Activated CD8-positive, alpha-beta T cell treated with anti-CD3 and anti-CD28 coated beads, Interleukin-2, amount 10 ng/mL, durations not matched to agents 7 days and 5 days (primary cell): ENCODE measurements at regions of chr10 and their contacts with region 1.

Region 1: GRCh38 chr10:101840741-101841453 is 2.7 kb downstream of the KCNIP2 start:
- DNase-seq: peak; percentile 82
- ATAC-seq: peak; percentile 74
- H3K4me3 Mint-ChIP-seq: peak overlapping the region; percentile 74
- H3K27ac Mint-ChIP-seq: no peak overlapping the region
- H3K4me1 Mint-ChIP-seq: peaks cover 43% of the 10 kb centered on the region
- H3K27me3 Mint-ChIP-seq: peaks cover 17% of the 10 kb centered on the region

Region 2: GRCh38 chr10:101716851-101717659 is 123.8 kb before region 1 on chr10:
- CTCF ChIA-PET with region 1: no interaction called
- POLR2A ChIA-PET with region 1: no interaction called
- DNase-seq: no peak
- ATAC-seq: no peak
- H3K4me3 Mint-ChIP-seq: no peak overlapping the region
- H3K27ac Mint-ChIP-seq: no peak overlapping the region
- H3K4me1 Mint-ChIP-seq: no peaks in the 10 kb centered on the region
- H3K27me3 Mint-ChIP-seq: peaks cover 25% of the 10 kb centered on the region

Region 3: DNA sequence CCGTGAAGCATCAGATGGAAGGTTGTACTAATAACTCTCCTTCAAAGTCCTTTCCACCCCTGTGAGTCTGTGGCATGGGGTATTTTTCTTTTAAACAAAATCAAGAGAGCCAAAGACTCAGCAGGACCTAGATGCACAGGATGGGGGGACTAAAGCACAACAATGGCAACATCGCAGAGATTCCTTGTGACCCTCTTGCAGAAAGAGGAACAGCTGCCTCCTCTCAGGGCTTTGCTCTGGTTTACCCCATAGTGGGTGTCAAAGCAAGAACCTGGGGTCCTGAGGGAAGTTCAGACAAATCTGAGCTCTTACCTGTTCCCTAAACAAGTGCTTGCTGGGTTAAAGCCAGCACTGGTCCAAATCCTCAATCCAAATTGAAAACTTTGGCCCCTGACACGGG is 104.2 kb before region 1 on chr10:
- CTCF ChIA-PET with region 1: no interaction called
- POLR2A ChIA-PET with region 1: no interaction called
- DNase-seq: no peak
- ATAC-seq: no peak
- H3K4me3 Mint-ChIP-seq: no peak overlapping the region
- H3K27ac Mint-ChIP-seq: no peak overlapping the region
- H3K4me1 Mint-ChIP-seq: no peaks in the 10 kb centered on the region
- H3K27me3 Mint-ChIP-seq: peaks cover 19% of the 10 kb centered on the region

Region 4: DNA sequence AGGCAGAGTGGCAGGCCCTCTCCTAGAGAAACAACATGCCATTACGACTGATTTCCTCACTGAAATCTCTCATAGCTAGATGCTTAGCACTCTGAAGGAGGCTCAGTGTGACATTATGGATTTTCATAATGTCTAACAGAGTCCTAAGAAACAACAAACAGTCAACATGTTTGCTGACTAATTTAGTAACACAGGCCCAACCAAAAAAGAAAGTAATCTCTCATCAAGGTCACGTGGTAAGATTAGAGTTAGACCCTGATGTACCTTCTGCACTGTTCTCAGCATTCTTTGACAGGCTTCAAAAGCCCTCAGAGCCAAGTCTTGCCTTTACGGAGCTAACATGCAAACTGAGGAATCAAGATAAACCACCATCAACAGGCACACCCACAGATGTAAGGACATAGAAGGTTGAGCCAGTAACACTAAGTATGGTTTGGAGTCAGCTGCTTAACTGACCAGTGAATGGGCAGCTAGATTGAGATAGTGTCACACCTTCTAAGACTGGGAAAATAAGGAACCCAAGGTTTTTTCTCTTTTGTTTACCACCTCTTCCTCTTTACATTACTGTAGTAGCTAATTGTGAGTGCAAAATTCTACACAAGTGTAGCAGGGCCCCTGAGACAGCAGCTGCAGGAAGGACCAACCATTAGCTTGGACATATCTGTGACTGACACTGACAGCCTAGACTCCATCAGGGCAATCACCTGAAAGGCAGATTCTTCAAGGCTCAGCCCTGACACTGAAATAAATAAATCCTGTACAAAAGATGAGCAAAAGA is 18.0 kb after region 1 on chr10:
- CTCF ChIA-PET with region 1: interaction called, 58 read pairs
- POLR2A ChIA-PET with region 1: interaction called, 5 read pairs
- DNase-seq: no peak
- ATAC-seq: peak; percentile 42
- H3K4me3 Mint-ChIP-seq: no peak overlapping the region
- H3K27ac Mint-ChIP-seq: no peak overlapping the region
- H3K4me1 Mint-ChIP-seq: peaks cover 6% of the 10 kb centered on the region
- H3K27me3 Mint-ChIP-seq: no peaks in the 10 kb centered on the region

Region 5: GRCh38 chr10:101889256-101890210 is 48.6 kb after region 1 on chr10:
- CTCF ChIA-PET with region 1: interaction called, 49 read pairs
- POLR2A ChIA-PET with region 1: no interaction called
- DNase-seq: peak; percentile 82
- ATAC-seq: peak; percentile 58
- H3K4me3 Mint-ChIP-seq: no peak overlapping the region
- H3K27ac Mint-ChIP-seq: no peak overlapping the region
- H3K4me1 Mint-ChIP-seq: no peaks in the 10 kb centered on the region
- H3K27me3 Mint-ChIP-seq: no peaks in the 10 kb centered on the region

Region 6: GRCh38 chr10:102009801-102010425 is 169.0 kb after region 1 on chr10:
- CTCF ChIA-PET with region 1: interaction called, 243 read pairs
- POLR2A ChIA-PET with region 1: interaction called, 4 read pairs
- DNase-seq: peak; percentile 56
- ATAC-seq: peak; percentile 88
- H3K4me3 Mint-ChIP-seq: no peak overlapping the region
- H3K27ac Mint-ChIP-seq: no peak overlapping the region
- H3K4me1 Mint-ChIP-seq: no peaks in the 10 kb centered on the region
- H3K27me3 Mint-ChIP-seq: no peaks in the 10 kb centered on the region

Region 7: DNA sequence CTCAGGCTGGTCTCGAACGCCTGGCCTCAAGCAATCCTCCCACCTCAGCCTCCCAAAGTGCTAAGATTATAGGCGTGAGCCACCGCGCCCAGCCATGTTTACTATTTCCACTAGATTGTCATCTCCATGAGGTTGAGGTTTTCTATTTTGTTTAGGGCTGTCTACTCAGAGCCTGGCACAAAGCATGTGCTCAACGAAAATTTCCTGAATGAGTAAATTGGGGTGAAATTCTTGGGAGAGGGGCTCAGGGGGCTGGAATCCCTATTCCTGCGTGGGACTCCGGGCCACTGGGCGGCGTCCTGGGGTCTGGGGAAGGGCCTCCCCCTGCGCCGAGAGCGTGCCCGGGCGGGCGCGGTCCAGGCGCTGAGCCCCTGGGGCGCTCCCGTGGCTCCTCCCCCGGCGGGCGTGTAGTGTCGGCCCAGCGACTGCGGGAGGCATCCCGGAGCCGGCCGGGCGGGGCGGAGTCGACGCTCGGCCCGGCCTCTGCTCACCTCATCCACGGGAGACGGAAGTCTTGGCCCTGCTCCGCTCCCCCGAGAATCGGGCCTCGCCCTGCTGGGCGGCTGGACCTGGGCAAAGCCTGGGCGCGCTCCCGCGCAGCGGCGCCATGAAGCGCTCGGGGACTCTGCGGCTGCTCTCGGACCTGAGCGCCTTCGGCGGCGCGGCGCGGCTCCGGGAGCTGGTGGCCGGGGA is 224.1 kb after region 1 on chr10 and contains the start of gene HPS6:
- CTCF ChIA-PET with region 1: interaction called, 44 read pairs
- POLR2A ChIA-PET with region 1: no interaction called
- DNase-seq: peak; percentile 91
- ATAC-seq: peak; percentile 99
- H3K4me3 Mint-ChIP-seq: peak within 1 kb of the TSS; percentile 85
- H3K27ac Mint-ChIP-seq: peak within 1 kb of the TSS; percentile 88
- H3K4me1 Mint-ChIP-seq: peaks cover 26% of the 10 kb centered on the region
- H3K27me3 Mint-ChIP-seq: no peaks in the 10 kb centered on the region
- total RNA-seq, gene HPS6: 23.2 to 25.3 TPM